Transverse colon (tissue), 4 donors: ENCODE measurements at regions of chr10 and their contacts with region 1.

Region 1: GRCh38 chr10:14556285-14556956 is 218.3 kb downstream of the FAM107B start:
- DNase-seq: peak; percentile 56
- H3K4me3 ChIP-seq: no peak overlapping the region
- H3K27ac ChIP-seq: peak overlapping the region; percentile 13 to 69 (median 36)
- H3K4me1 ChIP-seq: peaks cover 28 to 61% (median 42%) of the 10 kb centered on the region in 4 donors
- H3K27me3 ChIP-seq: no peaks in the 10 kb centered on the region
- CTCF ChIP-seq: peak in 2 of 5 experiments; percentile 8 to 25
- EP300 ChIP-seq: no peak
- POLR2A ChIP-seq: no peak

Region 2: GRCh38 chr10:14536241-14537213 is 19.9 kb before region 1 on chr10:
- in situ Hi-C with region 1: no loop called
- intact Hi-C with region 1: loop called (anchors 1 kb)
- DNase-seq: peak; percentile 82
- H3K4me3 ChIP-seq: no peak overlapping the region
- H3K27ac ChIP-seq: peak overlapping the region in 2 of 4 donors; percentile 5 to 6
- H3K4me1 ChIP-seq: peaks cover 0 to 30% (median 18%) of the 10 kb centered on the region in 4 donors
- H3K27me3 ChIP-seq: no peaks in the 10 kb centered on the region
- CTCF ChIP-seq: peak; percentile 57 to 65 (median 59)
- EP300 ChIP-seq: no peak
- POLR2A ChIP-seq: no peak

Region 3: DNA sequence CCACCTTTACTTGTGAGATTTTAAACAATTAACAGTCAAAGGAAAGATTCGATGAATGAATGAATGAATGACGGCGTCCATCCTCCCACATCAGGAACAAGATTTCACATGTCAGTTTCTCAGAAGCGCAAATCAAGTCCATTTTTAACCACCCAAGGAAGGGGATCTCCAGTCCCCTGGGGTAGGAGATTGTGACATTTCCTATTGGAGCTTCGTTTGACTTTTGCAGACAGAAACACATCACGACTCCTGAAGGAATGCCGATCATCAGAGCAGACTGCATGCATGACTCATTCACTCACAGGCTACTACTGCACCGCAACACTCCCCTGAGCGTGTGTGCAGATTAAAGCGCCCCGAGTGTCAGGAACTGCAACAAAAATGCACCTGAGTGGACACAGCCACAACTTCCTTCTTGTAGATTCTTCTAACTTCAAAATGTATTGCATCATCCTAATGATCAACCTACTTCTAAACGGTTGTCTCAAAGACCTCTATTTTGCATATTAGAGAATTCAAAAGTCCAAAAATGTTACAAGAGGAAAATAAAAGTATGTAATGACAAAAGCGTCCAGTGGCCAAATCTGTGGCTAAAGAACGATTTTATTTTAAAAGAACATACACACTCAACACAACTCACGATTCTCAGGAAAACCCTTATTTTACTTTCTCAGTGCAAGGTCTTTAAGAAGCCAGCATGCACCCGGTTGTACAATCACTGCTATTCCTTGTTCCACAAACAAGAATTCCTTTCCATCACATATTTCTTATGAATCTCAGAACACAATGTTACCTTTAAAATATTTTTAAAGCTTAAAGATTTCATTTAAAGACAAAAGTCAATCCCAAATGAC is 45.7 kb after region 1 on chr10:
- in situ Hi-C with region 1: no loop called
- intact Hi-C with region 1: no loop called
- DNase-seq: peak; percentile 55
- H3K4me3 ChIP-seq: peak overlapping the region in 1 of 4 donors; percentile 71
- H3K27ac ChIP-seq: peak overlapping the region in 3 of 4 donors; percentile 20 to 83 (median 30)
- H3K4me1 ChIP-seq: peaks cover 6 to 33% (median 16%) of the 10 kb centered on the region in 4 donors
- H3K27me3 ChIP-seq: no peaks in the 10 kb centered on the region
- CTCF ChIP-seq: no peak
- EP300 ChIP-seq: no peak
- POLR2A ChIP-seq: no peak

Region 4: GRCh38 chr10:14705548-14706230 is 149.3 kb after region 1 on chr10:
- in situ Hi-C with region 1: no loop called
- intact Hi-C with region 1: no loop called
- DNase-seq: no peak
- H3K4me3 ChIP-seq: no peak overlapping the region
- H3K27ac ChIP-seq: no peak overlapping the region
- H3K4me1 ChIP-seq: no peaks in the 10 kb centered on the region
- H3K27me3 ChIP-seq: no peaks in the 10 kb centered on the region
- CTCF ChIP-seq: no peak
- EP300 ChIP-seq: no peak
- POLR2A ChIP-seq: no peak